ENCODE measurements at regions of chr1 and their contacts with region 1.

Region 1: GRCh38 chr1:30718636-30719405 is 4.6 kb downstream of the MATN1 start:
- DNase-seq: peak; percentile 85
- H3K4me3 Mint-ChIP-seq: peak overlapping the region; percentile 94
- H3K27ac Mint-ChIP-seq: peak overlapping the region; percentile 91
- H3K4me1 Mint-ChIP-seq: peaks cover 18% of the 10 kb centered on the region
- H3K27me3 Mint-ChIP-seq: no peaks in the 10 kb centered on the region

Region 2: GRCh38 chr1:30689901-30690645 is 28.7 kb before region 1 on chr1:
- CTCF ChIA-PET with region 1: no interaction called
- POLR2A ChIA-PET with region 1: no interaction called
- DNase-seq: no peak
- H3K4me3 Mint-ChIP-seq: no peak overlapping the region
- H3K27ac Mint-ChIP-seq: no peak overlapping the region
- H3K4me1 Mint-ChIP-seq: no peaks in the 10 kb centered on the region
- H3K27me3 Mint-ChIP-seq: peaks cover 26% of the 10 kb centered on the region

Region 3: GRCh38 chr1:30743584-30744059 is 24.8 kb after region 1 on chr1:
- CTCF ChIA-PET with region 1: interaction called, 56 read pairs
- POLR2A ChIA-PET with region 1: interaction called, 32 read pairs
- DNase-seq: peak; percentile 82
- H3K4me3 Mint-ChIP-seq: peak overlapping the region; percentile 56
- H3K27ac Mint-ChIP-seq: peak overlapping the region; percentile 91
- H3K4me1 Mint-ChIP-seq: peaks cover 99% of the 10 kb centered on the region
- H3K27me3 Mint-ChIP-seq: no peaks in the 10 kb centered on the region

Region 4: GRCh38 chr1:30749691-30750583 is 31.1 kb after region 1 on chr1:
- CTCF ChIA-PET with region 1: interaction called, 56 read pairs
- POLR2A ChIA-PET with region 1: interaction called, 32 read pairs
- DNase-seq: peak; percentile 81
- H3K4me3 Mint-ChIP-seq: peak overlapping the region; percentile 75
- H3K27ac Mint-ChIP-seq: peak overlapping the region; percentile 91
- H3K4me1 Mint-ChIP-seq: peaks cover 99% of the 10 kb centered on the region
- H3K27me3 Mint-ChIP-seq: no peaks in the 10 kb centered on the region

Region 5: GRCh38 chr1:30756545-30757195 is 37.8 kb after region 1 on chr1:
- CTCF ChIA-PET with region 1: interaction called, 67 read pairs
- POLR2A ChIA-PET with region 1: interaction called, 32 read pairs
- DNase-seq: peak; percentile 84
- H3K4me3 Mint-ChIP-seq: peak overlapping the region; percentile 95
- H3K27ac Mint-ChIP-seq: peak overlapping the region; percentile 93
- H3K4me1 Mint-ChIP-seq: peaks cover 87% of the 10 kb centered on the region
- H3K27me3 Mint-ChIP-seq: no peaks in the 10 kb centered on the region

Region 6: DNA sequence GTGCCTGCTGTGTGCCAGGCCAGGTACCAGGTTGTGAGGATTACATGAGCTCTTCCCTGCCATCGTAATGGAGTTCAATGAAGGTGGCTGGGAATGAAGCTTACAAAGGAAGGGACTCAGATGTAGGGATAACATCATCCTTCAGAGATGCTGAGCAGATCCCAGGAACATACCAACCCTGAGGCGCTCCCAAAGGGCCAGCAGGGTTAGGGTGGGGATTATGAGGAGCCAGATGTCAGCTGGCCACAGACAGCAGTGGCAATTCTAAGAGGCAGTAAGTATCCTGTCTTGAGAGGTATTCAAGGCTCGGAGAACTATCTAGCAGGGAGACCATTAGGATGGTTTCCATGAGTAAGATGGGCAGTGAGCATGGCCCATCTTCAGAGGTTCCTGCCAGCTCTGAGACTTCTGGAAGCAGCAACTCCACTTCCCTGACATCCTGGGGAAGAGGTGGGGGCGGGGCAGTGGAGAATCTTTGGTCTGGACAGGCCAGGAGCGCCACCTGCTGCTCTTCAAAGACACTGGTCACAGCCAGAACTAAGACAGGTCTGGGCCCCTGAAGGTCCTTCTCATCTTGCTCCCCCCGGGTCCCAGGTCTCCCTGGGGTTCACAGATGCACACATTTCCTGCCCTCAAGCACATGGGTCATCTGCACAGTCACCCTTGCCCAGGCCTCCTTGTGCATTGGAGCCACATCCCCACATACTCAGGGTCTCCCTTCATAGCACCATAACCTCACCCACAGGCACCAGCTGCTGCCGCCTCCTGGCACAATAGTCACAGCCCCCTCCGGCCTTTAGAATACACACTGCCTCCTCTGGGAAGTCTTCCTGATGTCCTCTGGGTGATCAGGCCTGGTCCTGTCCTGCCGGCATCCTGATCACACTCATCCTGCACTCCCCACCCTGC is 192.5 kb after region 1 on chr1:
- CTCF ChIA-PET with region 1: interaction called, 21 read pairs
- POLR2A ChIA-PET with region 1: no interaction called
- DNase-seq: peak; percentile 62
- H3K4me3 Mint-ChIP-seq: no peak overlapping the region
- H3K27ac Mint-ChIP-seq: no peak overlapping the region
- H3K4me1 Mint-ChIP-seq: peaks cover 19% of the 10 kb centered on the region
- H3K27me3 Mint-ChIP-seq: peaks cover 34% of the 10 kb centered on the region